ENCODE measurements at regions of chr1 and their contacts with region 1.

Region 1: DNA sequence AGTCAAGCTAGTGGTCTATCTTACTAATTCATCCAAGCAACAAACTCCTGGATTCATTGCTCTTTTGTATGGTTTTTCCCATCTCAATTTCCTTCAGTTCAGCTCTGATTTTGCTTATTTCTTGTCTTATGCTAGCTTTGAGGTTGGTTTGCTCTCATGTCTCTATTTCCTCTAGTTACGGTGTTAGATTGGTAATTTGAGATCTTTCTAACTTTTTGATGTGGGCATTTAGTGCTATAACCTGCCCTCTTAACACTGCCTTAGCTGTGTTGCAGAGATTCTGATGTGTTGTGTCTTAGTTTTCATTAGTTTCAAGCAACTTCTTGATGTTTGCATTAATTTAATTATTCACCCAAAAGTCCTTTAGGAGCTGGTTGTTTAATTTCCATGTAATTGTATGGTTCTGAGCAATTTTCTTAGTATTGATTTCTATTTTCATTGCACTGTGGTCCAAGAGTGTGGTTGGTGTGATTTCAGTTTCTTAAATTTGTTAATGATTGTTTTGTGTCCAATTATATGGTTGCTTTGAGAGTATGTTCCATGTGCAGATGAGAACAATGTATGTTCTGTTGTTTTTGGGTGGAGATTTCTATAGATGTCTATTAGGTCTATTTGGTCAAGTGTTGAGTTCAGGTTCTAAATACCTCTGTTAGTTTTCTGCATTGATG is 154.6 kb downstream of the PLPPR5 start:
- DNase-seq: peak in 6 of 9 donors; percentile 29 to 61 (median 50)
- ATAC-seq: peak; percentile 80
- H3K4me3 ChIP-seq: peak overlapping the region; percentile 1
- H3K4me3 Mint-ChIP-seq: peak overlapping the region in 8 of 10 donors; percentile 49 to 80 (median 65)
- H3K27ac ChIP-seq: no peak overlapping the region
- H3K27ac Mint-ChIP-seq: peak overlapping the region in 8 of 9 donors; percentile 4 to 77 (median 68)
- H3K4me1 ChIP-seq: peaks cover 20 to 25% of the 10 kb centered on the region in 2 donors
- H3K4me1 Mint-ChIP-seq: peaks cover 10 to 36% (median 34%) of the 10 kb centered on the region in 7 donors
- H3K27me3 ChIP-seq: no peaks in the 10 kb centered on the region
- H3K27me3 Mint-ChIP-seq: no peaks in the 10 kb centered on the region

Region 2: DNA sequence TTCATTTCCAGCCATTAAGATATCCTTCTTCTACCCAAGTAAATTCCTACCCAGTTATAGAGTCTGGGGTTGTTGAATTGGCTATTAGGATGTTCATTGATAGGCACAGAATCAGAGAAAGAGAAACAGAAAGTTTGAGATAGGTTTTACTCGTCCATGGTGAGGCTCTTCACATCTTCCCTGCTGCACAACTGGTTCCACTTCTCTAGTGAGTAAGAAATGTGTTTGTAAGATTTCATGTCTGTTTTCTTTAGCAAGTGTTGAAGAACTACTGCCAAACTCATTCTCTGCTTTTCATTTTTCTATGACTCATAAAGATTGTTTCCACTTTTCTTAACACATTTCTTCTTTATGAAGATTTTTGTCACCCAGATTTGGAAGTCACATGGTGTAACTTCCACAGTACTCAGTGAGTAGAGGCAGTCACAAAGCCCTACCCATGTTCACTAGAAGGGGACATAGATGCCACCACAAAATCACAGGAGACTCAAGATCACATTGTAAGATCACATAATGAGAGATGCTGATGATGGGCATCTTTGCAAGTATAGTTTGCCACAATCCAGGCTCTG is 36.3 kb before region 1 on chr1:
- CTCF ChIA-PET with region 1: no interaction called
- POLR2A ChIA-PET with region 1: no interaction called
- intact Hi-C with region 1: loop called in 1 of 2 experiments (anchors 5 kb)
- DNase-seq: no peak
- ATAC-seq: no peak
- H3K4me3 ChIP-seq: no peak overlapping the region
- H3K4me3 Mint-ChIP-seq: peak overlapping the region in 6 of 10 donors; percentile 6 to 48 (median 41)
- H3K27ac ChIP-seq: no peak overlapping the region
- H3K27ac Mint-ChIP-seq: peak overlapping the region in 6 of 9 donors; percentile 6 to 60 (median 14)
- H3K4me1 ChIP-seq: no peaks in the 10 kb centered on the region
- H3K4me1 Mint-ChIP-seq: peaks cover 4 to 28% (median 15%) of the 10 kb centered on the region in 7 donors
- H3K27me3 ChIP-seq: no peaks in the 10 kb centered on the region
- H3K27me3 Mint-ChIP-seq: no peaks in the 10 kb centered on the region